Activated naive CD4-positive, alpha-beta T cell treated with anti-CD3 and anti-CD28 coated beads, Interleukin-2, amount 10 ng/mL, durations not matched to agents 7 days and 5 days (primary cell): ENCODE measurements at regions of chr1 and their contacts with region 1.

Region 1: DNA sequence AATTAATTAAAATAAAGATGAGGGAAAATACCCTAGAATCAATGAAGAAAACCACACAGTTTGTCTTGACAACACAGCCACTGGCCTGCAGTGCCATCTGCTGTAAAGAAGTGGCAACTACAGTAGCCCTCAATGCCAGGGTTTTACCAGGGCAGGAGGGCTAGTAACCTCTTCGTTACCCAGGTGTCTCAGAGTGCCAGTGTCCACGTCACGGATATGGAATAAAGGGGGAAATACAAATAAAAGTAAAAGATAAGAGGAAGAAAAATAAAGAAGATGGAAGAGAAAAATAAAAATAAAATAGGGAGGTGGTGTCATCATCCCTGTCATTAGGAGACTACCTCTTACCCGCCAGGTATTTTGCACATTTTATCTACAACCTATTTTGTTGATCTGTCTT is 14.2 kb upstream of the SLC44A3 start:
- DNase-seq: peak; percentile 64
- H3K4me3 Mint-ChIP-seq: no peak overlapping the region
- H3K27ac Mint-ChIP-seq: no peak overlapping the region
- H3K4me1 Mint-ChIP-seq: peaks cover 34% of the 10 kb centered on the region
- H3K27me3 Mint-ChIP-seq: peaks cover 7% of the 10 kb centered on the region

Region 2: GRCh38 chr1:94481473-94481933 is 324.4 kb before region 1 on chr1:
- CTCF ChIA-PET with region 1: interaction called, 71 read pairs
- DNase-seq: peak; percentile 47
- H3K4me3 Mint-ChIP-seq: no peak overlapping the region
- H3K27ac Mint-ChIP-seq: no peak overlapping the region
- H3K4me1 Mint-ChIP-seq: no peaks in the 10 kb centered on the region
- H3K27me3 Mint-ChIP-seq: no peaks in the 10 kb centered on the region

Region 3: GRCh38 chr1:94514095-94514727 is 291.7 kb before region 1 on chr1:
- CTCF ChIA-PET with region 1: interaction called, 58 read pairs
- DNase-seq: peak; percentile 37
- H3K4me3 Mint-ChIP-seq: no peak overlapping the region
- H3K27ac Mint-ChIP-seq: no peak overlapping the region
- H3K4me1 Mint-ChIP-seq: no peaks in the 10 kb centered on the region
- H3K27me3 Mint-ChIP-seq: no peaks in the 10 kb centered on the region

Region 4: GRCh38 chr1:94854458-94855306 is 48.8 kb after region 1 on chr1:
- CTCF ChIA-PET with region 1: interaction called, 16 read pairs
- DNase-seq: peak; percentile 88
- H3K4me3 Mint-ChIP-seq: no peak overlapping the region
- H3K27ac Mint-ChIP-seq: no peak overlapping the region
- H3K4me1 Mint-ChIP-seq: no peaks in the 10 kb centered on the region
- H3K27me3 Mint-ChIP-seq: peaks cover 14% of the 10 kb centered on the region